Activated naive CD4-positive, alpha-beta T cell treated with anti-CD3 and anti-CD28 coated beads for 36 hours (primary cell): ENCODE measurements at regions of chr1 and their contacts with region 1.

Region 1: DNA sequence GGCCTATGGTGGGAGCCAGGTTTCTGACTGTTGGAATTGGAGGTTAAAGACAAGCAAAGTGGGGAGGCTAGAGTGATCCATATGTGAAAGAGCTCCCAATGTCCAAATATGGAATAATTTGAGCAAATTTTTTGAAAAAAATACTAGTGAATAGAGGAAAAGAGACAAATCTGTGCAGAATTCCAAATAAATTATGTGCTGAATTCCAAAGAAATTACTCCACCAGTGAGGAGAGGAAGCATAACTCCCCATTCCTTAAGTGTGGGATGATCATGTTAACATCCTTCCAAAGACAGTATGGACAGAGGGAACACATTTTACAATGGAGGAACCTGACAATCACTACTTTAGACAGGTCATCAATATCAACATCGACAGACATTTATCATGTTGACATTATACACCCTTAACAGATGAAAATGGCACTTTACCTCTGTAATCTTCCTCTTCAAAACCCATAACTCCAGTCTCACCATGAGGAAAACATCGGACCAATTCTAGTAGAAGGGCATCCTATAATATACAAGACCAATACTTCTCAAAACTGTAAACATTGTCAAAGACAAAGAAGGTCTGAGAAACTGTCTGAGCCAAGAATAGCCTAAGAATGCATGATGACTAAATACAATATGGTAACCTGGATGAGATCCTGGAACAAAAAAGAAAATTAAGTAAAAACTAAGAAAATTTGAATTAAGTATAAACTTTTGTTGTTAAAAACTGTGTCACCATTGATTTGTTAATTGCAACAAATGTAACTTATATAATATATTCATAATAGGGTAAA is 71.5 kb upstream of the RGS4 start:
- DNase-seq: no peak
- H3K4me3 Mint-ChIP-seq: no peak overlapping the region
- H3K27ac Mint-ChIP-seq: no peak overlapping the region
- H3K4me1 Mint-ChIP-seq: no peaks in the 10 kb centered on the region
- H3K27me3 Mint-ChIP-seq: peaks cover 7% of the 10 kb centered on the region

Region 2: DNA sequence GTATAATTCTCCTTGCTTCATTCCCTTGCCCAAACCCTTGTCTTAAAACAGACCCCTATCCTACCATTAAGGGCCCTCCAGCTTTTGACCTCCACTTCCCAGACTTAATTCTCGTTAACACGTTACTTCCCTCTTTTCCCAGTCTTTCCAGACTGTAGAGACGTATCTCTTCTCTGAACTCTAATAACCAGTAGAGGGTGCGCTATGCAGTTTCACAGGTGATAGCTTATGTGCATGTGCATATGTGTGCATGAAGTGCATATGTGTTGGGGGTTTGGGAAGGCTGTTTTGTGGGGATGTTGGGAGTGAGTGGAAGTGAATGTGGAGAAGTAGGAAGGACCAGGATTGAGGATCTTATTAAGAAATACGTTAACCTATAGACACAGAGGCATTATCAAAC is 58.7 kb before region 1 on chr1:
- CTCF ChIA-PET with region 1: no interaction called
- intact Hi-C with region 1: loop called (anchors 10 kb)
- DNase-seq: no peak
- H3K4me3 Mint-ChIP-seq: no peak overlapping the region
- H3K27ac Mint-ChIP-seq: no peak overlapping the region
- H3K4me1 Mint-ChIP-seq: peaks cover 3% of the 10 kb centered on the region
- H3K27me3 Mint-ChIP-seq: peaks cover 21% of the 10 kb centered on the region